ENCODE measurements at regions of chr13 and their contacts with region 1.

Region 1: GRCh38 chr13:113142876-113143275 is 15.6 kb upstream of the PROZ start:
- DNase-seq: no peak
- ATAC-seq: no peak
- H3K4me3 ChIP-seq: no peak overlapping the region
- H3K4me3 Mint-ChIP-seq: no peak overlapping the region
- H3K27ac ChIP-seq: no peak overlapping the region
- H3K27ac Mint-ChIP-seq: no peak overlapping the region
- H3K4me1 ChIP-seq: no peaks in the 10 kb centered on the region
- H3K4me1 Mint-ChIP-seq: no peaks in the 10 kb centered on the region
- H3K27me3 ChIP-seq: peaks cover 0 to 28% of the 10 kb centered on the region in 2 experiments
- H3K27me3 Mint-ChIP-seq: peaks cover 4 to 8% of the 10 kb centered on the region in 2 donors

Region 2: GRCh38 chr13:113275387-113275786 is 132.5 kb after region 1 on chr13:
- CTCF ChIA-PET with region 1: no interaction called
- POLR2A ChIA-PET with region 1: interaction called in 1 of 2 experiments, 10 read pairs
- DNase-seq: peak in 29 of 35 experiments; percentile 7 to 61 (median 30)
- ATAC-seq: peak in 3 of 4 experiments; percentile 32 to 74 (median 53)
- H3K4me3 ChIP-seq: no peak overlapping the region
- H3K4me3 Mint-ChIP-seq: no peak overlapping the region
- H3K27ac ChIP-seq: no peak overlapping the region
- H3K27ac Mint-ChIP-seq: no peak overlapping the region
- H3K4me1 ChIP-seq: peaks cover 0 to 6% of the 10 kb centered on the region in 2 experiments
- H3K4me1 Mint-ChIP-seq: peaks cover 0 to 13% (median 7%) of the 10 kb centered on the region in 3 donors
- H3K27me3 ChIP-seq: peaks cover 0 to 6% of the 10 kb centered on the region in 2 experiments
- H3K27me3 Mint-ChIP-seq: peaks cover 0 to 10% of the 10 kb centered on the region in 2 donors

Measured in T-cell (primary cell).